ENCODE measurements at regions of chr5 and their contacts with region 1.

Region 1: GRCh38 chr5:101995585-101995984 is 300.5 kb downstream of the SLCO4C1 start:
- DNase-seq: peak in 1 of 2 experiments; percentile 79
- H3K4me3 ChIP-seq: no peak overlapping the region
- H3K4me3 Mint-ChIP-seq: peak overlapping the region; percentile 4
- H3K27ac Mint-ChIP-seq: peak overlapping the region; percentile 15
- H3K4me1 ChIP-seq: peaks cover 33% of the 10 kb centered on the region
- H3K4me1 Mint-ChIP-seq: peaks cover 37% of the 10 kb centered on the region
- H3K27me3 ChIP-seq: no peaks in the 10 kb centered on the region
- H3K27me3 Mint-ChIP-seq: no peaks in the 10 kb centered on the region
- CTCF ChIP-seq: no peak

Region 2: GRCh38 chr5:102138243-102138653 is 142.7 kb after region 1 on chr5:
- CTCF ChIA-PET with region 1: no interaction called
- POLR2A ChIA-PET with region 1: interaction called, 4 read pairs
- intact Hi-C with region 1: loop called (anchors 5 kb)
- DNase-seq: peak; percentile 85 to 93
- H3K4me3 ChIP-seq: no peak overlapping the region
- H3K4me3 Mint-ChIP-seq: peak overlapping the region; percentile 65
- H3K27ac Mint-ChIP-seq: peak overlapping the region; percentile 94
- H3K4me1 ChIP-seq: peaks cover 28% of the 10 kb centered on the region
- H3K4me1 Mint-ChIP-seq: peaks cover 14% of the 10 kb centered on the region
- H3K27me3 ChIP-seq: no peaks in the 10 kb centered on the region
- H3K27me3 Mint-ChIP-seq: no peaks in the 10 kb centered on the region
- CTCF ChIP-seq: no peak

Measured in Caco-2 (cell line).